Activated T-helper 1 cell treated with anti-CD3 and anti-CD28 coated beads, Interleukin-12 subunit alpha, Interleukin-12 subunit beta, Interleukin-2, Interleukin-4 antibody, amounts not matched to agents 30 ng/mL and 10 ng/mL and 1 ng/mL, durations not matched to agents 14 hours and 24 hours and 36 hours (primary cell): ENCODE measurements at regions of chr17 and their contacts with region 1.

Region 1: DNA sequence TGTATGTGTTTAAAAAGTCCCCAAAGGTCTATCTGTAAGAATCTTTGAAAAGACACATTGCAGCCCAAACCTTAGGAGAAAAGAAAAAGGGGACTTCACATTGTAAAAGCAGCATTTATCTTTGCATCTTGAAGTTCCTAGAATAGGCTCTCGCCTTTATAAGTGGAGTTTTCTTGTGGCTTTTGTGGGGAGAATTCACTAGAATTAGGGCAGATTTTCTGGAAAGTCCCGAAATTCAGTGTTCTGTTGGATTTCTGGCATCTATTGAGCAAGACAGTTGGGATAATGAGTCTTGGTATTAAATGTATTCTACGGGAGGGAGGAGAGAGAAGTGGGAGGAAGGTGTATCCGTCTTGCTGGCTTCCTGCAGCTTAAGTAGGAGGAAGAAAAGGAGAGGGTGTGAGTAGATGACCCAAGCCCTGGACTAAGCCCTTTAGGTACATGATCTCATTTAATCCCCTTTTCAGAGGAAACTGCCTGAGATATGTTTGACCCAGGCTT is 62.6 kb downstream of the PRKCA start:
- DNase-seq: no peak
- H3K4me3 Mint-ChIP-seq: peak overlapping the region; percentile 53
- H3K27ac Mint-ChIP-seq: peak overlapping the region; percentile 91
- H3K4me1 Mint-ChIP-seq: peaks cover 83% of the 10 kb centered on the region
- H3K27me3 Mint-ChIP-seq: no peaks in the 10 kb centered on the region

Region 2: GRCh38 chr17:66331038-66331816 is 33.8 kb before region 1 on chr17:
- intact Hi-C with region 1: loop called (anchors 2 kb)
- DNase-seq: peak; percentile 17
- H3K4me3 Mint-ChIP-seq: peak overlapping the region; percentile 70
- H3K27ac Mint-ChIP-seq: peak overlapping the region; percentile 91
- H3K4me1 Mint-ChIP-seq: peaks cover 68% of the 10 kb centered on the region
- H3K27me3 Mint-ChIP-seq: no peaks in the 10 kb centered on the region

Region 3: GRCh38 chr17:66426397-66427033 is 61.5 kb after region 1 on chr17:
- intact Hi-C with region 1: loop called (anchors 2 kb)
- DNase-seq: peak; percentile 48
- H3K4me3 Mint-ChIP-seq: peak overlapping the region; percentile 23
- H3K27ac Mint-ChIP-seq: peak overlapping the region; percentile 66
- H3K4me1 Mint-ChIP-seq: peaks cover 65% of the 10 kb centered on the region
- H3K27me3 Mint-ChIP-seq: no peaks in the 10 kb centered on the region

Region 4: DNA sequence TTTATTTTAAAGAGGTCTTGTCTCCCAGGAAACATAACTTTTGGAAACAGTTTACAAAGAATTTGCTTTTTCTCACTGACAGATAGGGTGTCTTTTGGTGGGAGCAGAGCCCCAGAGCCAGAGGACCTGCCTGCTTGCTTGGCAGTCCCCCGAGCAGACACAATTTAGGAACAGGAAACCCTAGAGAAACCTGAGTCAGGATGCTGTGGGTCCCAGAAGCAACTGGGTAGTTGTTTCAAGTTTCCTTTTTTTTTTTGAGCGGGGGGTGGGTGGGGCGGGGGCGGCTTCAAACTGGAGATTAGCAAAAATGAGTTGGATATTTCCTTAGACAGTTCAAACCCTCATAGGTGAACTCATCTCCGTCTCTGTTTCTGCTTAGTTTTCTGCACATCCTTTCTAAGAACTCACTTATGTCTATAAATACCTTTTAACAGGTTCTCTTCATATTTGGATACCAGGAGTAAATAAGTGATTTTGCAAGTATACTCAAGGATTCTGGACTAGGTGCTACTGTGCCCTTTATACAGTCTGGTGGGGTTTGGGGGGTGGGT is 72.5 kb after region 1 on chr17:
- intact Hi-C with region 1: no loop called
- DNase-seq: no peak
- H3K4me3 Mint-ChIP-seq: no peak overlapping the region
- H3K27ac Mint-ChIP-seq: peak overlapping the region; percentile 72
- H3K4me1 Mint-ChIP-seq: peaks cover 24% of the 10 kb centered on the region
- H3K27me3 Mint-ChIP-seq: no peaks in the 10 kb centered on the region

Region 5: GRCh38 chr17:66474258-66474657 is 109.2 kb after region 1 on chr17:
- intact Hi-C with region 1: no loop called
- DNase-seq: no peak
- H3K4me3 Mint-ChIP-seq: no peak overlapping the region
- H3K27ac Mint-ChIP-seq: no peak overlapping the region
- H3K4me1 Mint-ChIP-seq: peaks cover 40% of the 10 kb centered on the region
- H3K27me3 Mint-ChIP-seq: no peaks in the 10 kb centered on the region